GM12878 (cell line): ENCODE measurements at regions of chr9 and their contacts with region 1.

Region 1: GRCh38 chr9:27836661-27837401 is 263.6 kb upstream of the C9orf72 start:
- DNase-seq: no peak
- ATAC-seq: no peak
- H3K4me3 ChIP-seq: no peak overlapping the region
- H3K27ac ChIP-seq: no peak overlapping the region
- H3K4me1 ChIP-seq: no peaks in the 10 kb centered on the region
- H3K27me3 ChIP-seq: no peaks in the 10 kb centered on the region
- CTCF ChIP-seq: no peak
- EP300 ChIP-seq: no peak
- POLR2A ChIP-seq: no peak
- RAD21 ChIP-seq: no peak

Region 2: GRCh38 chr9:27785714-27786100 is 51.1 kb before region 1 on chr9:
- CTCF ChIA-PET with region 1: interaction called, 5 read pairs
- POLR2A ChIA-PET with region 1: no interaction called
- RAD21 ChIA-PET with region 1: interaction called, 10 read pairs
- SMC1A ChIA-PET with region 1: interaction called, 4 read pairs
- in situ Hi-C with region 1: no loop called
- intact Hi-C with region 1: no loop called
- DNase-seq: peak; percentile 23
- ATAC-seq: peak; percentile 93
- H3K4me3 ChIP-seq: no peak overlapping the region
- H3K27ac ChIP-seq: no peak overlapping the region
- H3K4me1 ChIP-seq: no peaks in the 10 kb centered on the region
- H3K27me3 ChIP-seq: no peaks in the 10 kb centered on the region
- CTCF ChIP-seq: no peak
- EP300 ChIP-seq: no peak
- POLR2A ChIP-seq: no peak
- RAD21 ChIP-seq: no peak

Region 3: GRCh38 chr9:27799326-27799725 is 37.5 kb before region 1 on chr9:
- CTCF ChIA-PET with region 1: interaction called, 4 read pairs
- POLR2A ChIA-PET with region 1: no interaction called
- RAD21 ChIA-PET with region 1: interaction called, 8 read pairs
- SMC1A ChIA-PET with region 1: interaction called, 14 read pairs
- in situ Hi-C with region 1: no loop called
- intact Hi-C with region 1: no loop called
- DNase-seq: no peak
- ATAC-seq: peak; percentile 28; the same call in 1 of the 3 replicates
- H3K4me3 ChIP-seq: no peak overlapping the region
- H3K27ac ChIP-seq: no peak overlapping the region
- H3K4me1 ChIP-seq: no peaks in the 10 kb centered on the region
- H3K27me3 ChIP-seq: no peaks in the 10 kb centered on the region
- CTCF ChIP-seq: no peak
- EP300 ChIP-seq: no peak
- POLR2A ChIP-seq: no peak
- RAD21 ChIP-seq: no peak

Region 4: GRCh38 chr9:28332648-28333047 is 495.8 kb after region 1 on chr9:
- CTCF ChIA-PET with region 1: no interaction called
- POLR2A ChIA-PET with region 1: no interaction called
- RAD21 ChIA-PET with region 1: no interaction called
- SMC1A ChIA-PET with region 1: no interaction called
- in situ Hi-C with region 1: no loop called
- intact Hi-C with region 1: no loop called
- DNase-seq: no peak
- ATAC-seq: no peak
- H3K4me3 ChIP-seq: no peak overlapping the region
- H3K27ac ChIP-seq: no peak overlapping the region
- H3K4me1 ChIP-seq: no peaks in the 10 kb centered on the region
- H3K27me3 ChIP-seq: no peaks in the 10 kb centered on the region
- CTCF ChIP-seq: no peak
- EP300 ChIP-seq: no peak
- POLR2A ChIP-seq: no peak
- RAD21 ChIP-seq: no peak